ENCODE measurements at regions of chr19 and their contacts with region 1.

Region 1: GRCh38 chr19:47186446-47187334 is 44.3 kb downstream of the BBC3 start:
- DNase-seq: peak; percentile 86
- ATAC-seq: peak; percentile 78
- H3K4me3 Mint-ChIP-seq: peak overlapping the region; percentile 31
- H3K27ac Mint-ChIP-seq: peak overlapping the region; percentile 88
- H3K4me1 Mint-ChIP-seq: peaks cover 73% of the 10 kb centered on the region
- H3K27me3 Mint-ChIP-seq: no peaks in the 10 kb centered on the region

Region 2: DNA sequence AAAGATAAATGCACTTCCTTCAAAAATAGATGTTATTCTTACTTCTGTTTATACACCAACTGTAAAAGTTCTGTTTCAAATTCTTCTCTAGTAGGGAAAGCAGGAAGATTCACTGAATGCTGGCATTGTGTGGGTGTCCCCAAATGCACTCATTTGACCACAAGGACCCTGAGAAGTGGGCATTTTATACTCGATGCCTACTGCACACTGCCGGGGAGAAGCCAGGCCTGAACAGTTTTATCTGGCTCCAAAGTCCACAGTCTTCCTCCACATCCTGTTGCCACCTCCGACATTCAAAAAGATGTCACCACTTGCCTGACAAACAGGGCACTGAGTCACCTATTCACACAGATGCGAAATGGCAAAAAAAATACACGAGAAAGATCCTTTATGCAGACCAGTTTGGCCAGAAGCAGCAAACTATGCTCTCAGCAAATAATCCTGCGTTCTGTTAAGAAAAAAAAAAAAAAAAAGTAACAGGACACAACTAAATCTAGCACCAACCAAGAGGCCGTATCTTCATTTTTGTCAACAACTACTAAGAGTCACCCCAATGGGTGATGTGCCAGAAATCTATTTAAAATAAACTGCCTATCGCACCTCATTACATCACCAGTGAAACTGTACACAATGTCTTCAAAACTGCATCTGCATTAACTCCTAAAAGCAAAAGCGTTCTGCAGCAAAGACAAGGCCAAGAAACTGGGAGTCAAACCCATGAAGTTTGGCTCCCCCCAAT is 79.3 kb before region 1 on chr19:
- CTCF ChIA-PET with region 1: no interaction called
- DNase-seq: peak; percentile 72
- ATAC-seq: peak; percentile 25
- H3K4me3 Mint-ChIP-seq: peak overlapping the region; percentile 49
- H3K27ac Mint-ChIP-seq: peak overlapping the region; percentile 100
- H3K4me1 Mint-ChIP-seq: peaks cover 65% of the 10 kb centered on the region
- H3K27me3 Mint-ChIP-seq: no peaks in the 10 kb centered on the region

Region 3: GRCh38 chr19:47152224-47153017 is 34.3 kb before region 1 on chr19:
- CTCF ChIA-PET with region 1: interaction called, 12 read pairs
- DNase-seq: no peak
- ATAC-seq: no peak
- H3K4me3 Mint-ChIP-seq: no peak overlapping the region
- H3K27ac Mint-ChIP-seq: peak overlapping the region; percentile 42
- H3K4me1 Mint-ChIP-seq: peaks cover 27% of the 10 kb centered on the region
- H3K27me3 Mint-ChIP-seq: no peaks in the 10 kb centered on the region

Region 4: DNA sequence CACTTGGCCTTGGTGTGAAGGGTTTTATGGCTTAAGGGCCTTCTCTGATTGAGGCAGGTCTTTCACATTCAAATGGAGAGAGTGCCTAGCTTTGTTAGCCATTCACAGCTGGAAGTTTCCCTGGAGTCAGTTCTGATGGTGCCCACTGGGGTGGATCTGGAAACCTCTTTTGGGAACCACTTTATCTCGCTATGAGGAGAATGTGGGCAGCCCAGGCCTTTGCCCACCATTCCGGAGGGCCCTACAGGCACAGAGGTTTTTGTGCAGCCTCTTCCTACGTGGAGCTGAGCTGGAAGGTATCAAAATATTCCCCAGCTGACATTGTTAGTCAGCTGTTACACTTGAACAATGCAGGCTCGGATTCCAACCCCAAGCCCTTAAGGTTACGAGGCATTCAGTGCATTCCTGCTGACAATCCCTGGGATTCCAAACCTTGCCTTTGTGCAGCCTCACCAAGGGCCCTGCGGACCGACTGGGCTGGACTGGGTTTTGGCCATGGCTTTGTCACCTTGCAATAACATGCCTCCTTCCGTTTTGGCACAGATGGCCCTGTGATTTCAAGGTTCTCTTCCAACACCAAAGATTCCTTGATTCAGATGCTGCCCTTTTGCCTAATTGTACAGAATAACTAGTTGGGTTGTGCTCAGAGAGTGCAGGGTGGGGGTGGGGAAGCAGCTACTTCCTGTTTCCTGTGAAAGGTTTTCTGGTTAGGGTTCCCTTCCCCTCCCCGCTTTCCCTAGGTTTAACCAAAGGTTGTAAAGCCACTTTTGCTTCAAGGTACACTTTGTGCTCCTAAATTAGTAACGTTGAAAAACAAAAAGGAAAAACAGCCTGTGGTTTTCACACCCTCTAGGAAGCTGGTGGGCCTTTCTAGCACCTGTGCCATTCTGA is 29.0 kb before region 1 on chr19:
- CTCF ChIA-PET with region 1: interaction called, 10 read pairs
- DNase-seq: peak; percentile 51
- ATAC-seq: peak; percentile 46
- H3K4me3 Mint-ChIP-seq: peak overlapping the region; percentile 10
- H3K27ac Mint-ChIP-seq: peak overlapping the region; percentile 73
- H3K4me1 Mint-ChIP-seq: peaks cover 44% of the 10 kb centered on the region
- H3K27me3 Mint-ChIP-seq: no peaks in the 10 kb centered on the region

Region 5: GRCh38 chr19:47225746-47226425 is 39.2 kb after region 1 on chr19:
- CTCF ChIA-PET with region 1: interaction called, 12 read pairs
- DNase-seq: peak; percentile 88
- ATAC-seq: peak; percentile 67
- H3K4me3 Mint-ChIP-seq: peak overlapping the region; percentile 75
- H3K27ac Mint-ChIP-seq: peak overlapping the region; percentile 90
- H3K4me1 Mint-ChIP-seq: peaks cover 18% of the 10 kb centered on the region
- H3K27me3 Mint-ChIP-seq: no peaks in the 10 kb centered on the region